WTC11 (cell line): ENCODE measurements at regions of chr11 and their contacts with region 1.

Region 1: GRCh38 chr11:9506489-9507276 is 45.9 kb downstream of the ZNF143 start:
- DNase-seq: peak; percentile 84
- ATAC-seq: peak; percentile 95
- H3K4me3 Mint-ChIP-seq: peak overlapping the region; percentile 3; the same call in 1 of the 2 replicates
- H3K27ac Mint-ChIP-seq: peak overlapping the region; percentile 95
- H3K4me1 Mint-ChIP-seq: peaks cover 26% of the 10 kb centered on the region
- H3K27me3 Mint-ChIP-seq: no peaks in the 10 kb centered on the region
- CTCF ChIP-seq: peak; percentile 76

Region 2: GRCh38 chr11:9460322-9461067 is 46.2 kb before region 1 on chr11 and contains the start of gene ZNF143:
- CTCF ChIA-PET with region 1: interaction called, 22 read pairs
- POLR2A ChIA-PET with region 1: interaction called, 8 read pairs
- DNase-seq: peak; percentile 100
- ATAC-seq: peak; percentile 96
- H3K4me3 Mint-ChIP-seq: peak within 1 kb of the TSS; percentile 98
- H3K27ac Mint-ChIP-seq: peak within 1 kb of the TSS; percentile 99
- H3K4me1 Mint-ChIP-seq: peaks cover 18% of the 10 kb centered on the region
- H3K27me3 Mint-ChIP-seq: no peaks in the 10 kb centered on the region
- CTCF ChIP-seq: no peak
- total RNA-seq, gene ZNF143: 34.0 to 35.8 TPM (median 34.0 TPM) in 3 replicates

Region 3: GRCh38 chr11:9527481-9528140 is 20.9 kb after region 1 on chr11:
- CTCF ChIA-PET with region 1: interaction called, 20 read pairs
- POLR2A ChIA-PET with region 1: no interaction called
- DNase-seq: no peak
- ATAC-seq: no peak
- H3K4me3 Mint-ChIP-seq: no peak overlapping the region
- H3K27ac Mint-ChIP-seq: peak overlapping the region; percentile 58
- H3K4me1 Mint-ChIP-seq: peaks cover 36% of the 10 kb centered on the region
- H3K27me3 Mint-ChIP-seq: no peaks in the 10 kb centered on the region
- CTCF ChIP-seq: no peak

Region 4: GRCh38 chr11:9601037-9601875 is 94.6 kb after region 1 on chr11:
- CTCF ChIA-PET with region 1: interaction called, 15 read pairs
- POLR2A ChIA-PET with region 1: no interaction called
- DNase-seq: peak; percentile 36
- ATAC-seq: peak; percentile 91
- H3K4me3 Mint-ChIP-seq: 0 out of 2 replicates have a peak overlapping the region, but pooled peaks have one; percentile 3
- H3K27ac Mint-ChIP-seq: peak overlapping the region; percentile 90
- H3K4me1 Mint-ChIP-seq: peaks cover 24% of the 10 kb centered on the region
- H3K27me3 Mint-ChIP-seq: no peaks in the 10 kb centered on the region
- CTCF ChIP-seq: no peak

Region 5: GRCh38 chr11:9626496-9627394 is 120.1 kb after region 1 on chr11:
- CTCF ChIA-PET with region 1: no interaction called
- POLR2A ChIA-PET with region 1: no interaction called
- DNase-seq: peak; percentile 62
- ATAC-seq: peak; percentile 97
- H3K4me3 Mint-ChIP-seq: peak overlapping the region; percentile 20; the same call in 1 of the 2 replicates
- H3K27ac Mint-ChIP-seq: peak overlapping the region; percentile 99
- H3K4me1 Mint-ChIP-seq: peaks cover 45% of the 10 kb centered on the region
- H3K27me3 Mint-ChIP-seq: no peaks in the 10 kb centered on the region
- CTCF ChIP-seq: no peak